Posterior vena cava (tissue), 2 donors: ENCODE measurements at regions of chr18 and their contacts with region 1.

Region 1: GRCh38 chr18:22471546-22472131 is 53.9 kb upstream of the CTAGE1 start:
- DNase-seq: peak; percentile 85

Region 2: DNA sequence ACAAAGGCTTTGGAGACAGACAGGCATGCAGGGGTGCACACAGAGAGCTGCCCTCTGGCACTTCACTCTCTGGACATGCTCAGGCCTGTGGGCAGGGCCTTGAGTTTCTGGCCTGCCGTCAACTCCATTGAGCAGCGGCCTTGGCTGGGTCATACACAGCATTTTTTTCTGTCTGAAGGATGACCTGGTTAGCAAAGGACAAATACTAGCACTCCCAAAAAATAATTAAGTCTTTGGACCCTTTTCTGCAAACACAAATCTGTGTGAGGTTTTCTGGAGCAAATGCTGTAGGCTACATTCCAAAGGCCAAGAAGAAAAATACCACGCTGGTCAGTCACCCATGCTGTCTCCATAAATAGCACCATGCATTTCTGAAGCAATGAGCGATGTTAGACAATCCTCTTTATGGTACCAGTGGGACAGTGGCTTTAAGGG is 70.8 kb after region 1 on chr18:
- intact Hi-C with region 1: loop called in 1 of 2 experiments (anchors 2 kb)
- DNase-seq: peak; percentile 88

Region 3: GRCh38 chr18:22552899-22553460 is 81.3 kb after region 1 on chr18:
- intact Hi-C with region 1: loop called in 1 of 2 experiments (anchors 1 kb)
- DNase-seq: no peak